GM12878 (cell line): ENCODE measurements at regions of chr10 and their contacts with region 1.

Region 1: GRCh38 chr10:24701447-24701846 is 22.2 kb downstream of the ARHGAP21 start:
- DNase-seq: peak; percentile 55
- ATAC-seq: peak; percentile 90
- H3K4me3 ChIP-seq: 0 out of 2 replicates have a peak overlapping the region, but pooled peaks have one; percentile 0
- H3K27ac ChIP-seq: no peak overlapping the region; the same call in 1 of the 2 replicates
- H3K4me1 ChIP-seq: peaks cover 6% of the 10 kb centered on the region
- H3K27me3 ChIP-seq: no peaks in the 10 kb centered on the region
- CTCF ChIP-seq: 0 out of 6 replicates have a peak, but pooled peaks of 2 of the 3 experiments have one; percentile 8 to 10
- EP300 ChIP-seq: no peak
- POLR2A ChIP-seq: no peak
- RAD21 ChIP-seq: no peak

Region 2: DNA sequence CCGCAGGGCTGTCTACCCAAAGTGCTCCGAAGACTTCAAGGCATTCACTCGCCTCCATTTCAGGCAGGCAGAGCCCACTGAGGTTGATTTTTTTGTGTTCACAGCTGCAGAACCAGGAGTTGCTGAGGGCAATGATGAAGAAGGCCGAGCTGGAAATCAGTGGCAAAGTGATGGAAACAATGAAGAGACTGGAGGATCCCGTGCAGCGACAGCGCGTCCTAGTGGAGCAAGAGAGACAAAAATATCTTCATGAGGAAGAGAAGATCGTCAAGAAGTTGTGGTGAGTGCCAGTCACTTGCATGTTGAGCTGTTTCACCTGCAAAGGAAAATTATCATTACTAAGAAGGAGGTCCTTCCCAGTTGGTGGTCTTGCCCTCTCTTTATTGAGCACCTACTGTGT is 188.3 kb before region 1 on chr10:
- CTCF ChIA-PET with region 1: no interaction called
- POLR2A ChIA-PET with region 1: no interaction called
- RAD21 ChIA-PET with region 1: no interaction called
- SMC1A ChIA-PET with region 1: no interaction called
- in situ Hi-C with region 1: no loop called
- intact Hi-C with region 1: no loop called
- DNase-seq: no peak
- ATAC-seq: no peak
- H3K4me3 ChIP-seq: no peak overlapping the region
- H3K27ac ChIP-seq: no peak overlapping the region
- H3K4me1 ChIP-seq: no peaks in the 10 kb centered on the region
- H3K27me3 ChIP-seq: no peaks in the 10 kb centered on the region; a peak in 1 of 4 replicates
- CTCF ChIP-seq: peak in 1 of 3 experiments; percentile 30; a peak in 3 of 6 replicates
- EP300 ChIP-seq: no peak
- POLR2A ChIP-seq: no peak
- RAD21 ChIP-seq: peak; percentile 47

Region 3: GRCh38 chr10:24652381-24652957 is 49.0 kb before region 1 on chr10:
- CTCF ChIA-PET with region 1: no interaction called
- POLR2A ChIA-PET with region 1: interaction called, 6 read pairs
- RAD21 ChIA-PET with region 1: interaction called, 3 read pairs
- SMC1A ChIA-PET with region 1: interaction called, 14 read pairs
- in situ Hi-C with region 1: no loop called
- intact Hi-C with region 1: loop called (anchors 5 kb)
- DNase-seq: peak; percentile 62
- ATAC-seq: peak; percentile 93
- H3K4me3 ChIP-seq: peak overlapping the region; percentile 46
- H3K27ac ChIP-seq: peak overlapping the region; percentile 76
- H3K4me1 ChIP-seq: peaks cover 15% of the 10 kb centered on the region
- H3K27me3 ChIP-seq: no peaks in the 10 kb centered on the region
- CTCF ChIP-seq: no peak
- EP300 ChIP-seq: peak; percentile 42 to 82; a peak in 3 of 4 replicates
- POLR2A ChIP-seq: no peak
- RAD21 ChIP-seq: no peak